MCF 10A (cell line): ENCODE measurements at regions of chr12 and their contacts with region 1.

Region 1: GRCh38 chr12:82627569-82628198 is 59.0 kb upstream of the TMTC2 start:
- DNase-seq: peak; percentile 52
- H3K4me3 Mint-ChIP-seq: no peak overlapping the region
- H3K27ac Mint-ChIP-seq: no peak overlapping the region
- H3K4me1 Mint-ChIP-seq: peaks cover 6% of the 10 kb centered on the region
- H3K27me3 Mint-ChIP-seq: no peaks in the 10 kb centered on the region
- CTCF ChIP-seq: peak; percentile 46

Region 2: GRCh38 chr12:82383930-82384552 is 243.6 kb before region 1 on chr12:
- CTCF ChIA-PET with region 1: interaction called, 8 read pairs
- POLR2A ChIA-PET with region 1: no interaction called
- intact Hi-C with region 1: loop called (anchors 1 kb)
- DNase-seq: peak; percentile 51
- H3K4me3 Mint-ChIP-seq: no peak overlapping the region
- H3K27ac Mint-ChIP-seq: no peak overlapping the region
- H3K4me1 Mint-ChIP-seq: no peaks in the 10 kb centered on the region
- H3K27me3 Mint-ChIP-seq: no peaks in the 10 kb centered on the region
- CTCF ChIP-seq: peak; percentile 51

Region 3: DNA sequence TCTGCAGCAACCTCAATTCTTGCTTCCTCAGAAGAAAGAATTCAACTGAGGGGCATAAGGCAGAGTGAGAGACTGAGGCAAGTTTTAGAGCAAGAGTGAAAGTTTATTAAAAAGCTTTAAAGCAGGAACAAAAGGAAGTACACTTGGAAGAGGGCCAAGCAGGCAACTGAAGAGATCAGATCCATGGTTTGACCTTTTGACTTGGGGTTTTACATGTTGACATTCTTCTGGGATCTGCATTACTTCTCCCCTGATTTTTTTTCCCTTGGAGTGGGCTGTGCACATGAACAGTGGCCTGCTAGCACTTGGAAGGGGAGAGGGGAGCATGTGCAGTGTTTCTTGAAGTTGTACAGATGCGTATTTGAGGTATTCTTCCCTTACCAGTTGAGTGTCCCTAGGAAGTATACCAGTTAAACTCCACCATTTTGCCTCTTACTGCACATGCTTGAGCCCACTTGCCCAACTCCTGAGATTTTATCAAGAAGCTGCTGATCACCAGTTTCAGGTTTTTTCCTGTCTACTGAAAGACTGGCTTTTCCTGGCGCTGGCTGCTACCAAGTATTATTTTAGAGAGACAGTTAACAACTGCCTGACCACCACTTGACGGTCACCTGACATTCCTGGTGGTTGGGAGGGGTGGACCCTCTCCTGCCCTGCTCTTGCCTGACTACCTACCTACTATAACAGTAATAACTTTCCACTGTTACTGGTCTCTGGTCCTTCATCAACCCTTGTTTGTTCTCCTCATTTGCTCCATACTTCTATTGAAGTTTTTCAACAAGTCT is 33.0 kb after region 1 on chr12:
- CTCF ChIA-PET with region 1: no interaction called
- POLR2A ChIA-PET with region 1: no interaction called
- intact Hi-C with region 1: no loop called
- DNase-seq: no peak
- H3K4me3 Mint-ChIP-seq: no peak overlapping the region
- H3K27ac Mint-ChIP-seq: no peak overlapping the region
- H3K4me1 Mint-ChIP-seq: peaks cover 9% of the 10 kb centered on the region
- H3K27me3 Mint-ChIP-seq: no peaks in the 10 kb centered on the region
- CTCF ChIP-seq: no peak